ENCODE measurements at regions of chr1 and their contacts with region 1.

Region 1: DNA sequence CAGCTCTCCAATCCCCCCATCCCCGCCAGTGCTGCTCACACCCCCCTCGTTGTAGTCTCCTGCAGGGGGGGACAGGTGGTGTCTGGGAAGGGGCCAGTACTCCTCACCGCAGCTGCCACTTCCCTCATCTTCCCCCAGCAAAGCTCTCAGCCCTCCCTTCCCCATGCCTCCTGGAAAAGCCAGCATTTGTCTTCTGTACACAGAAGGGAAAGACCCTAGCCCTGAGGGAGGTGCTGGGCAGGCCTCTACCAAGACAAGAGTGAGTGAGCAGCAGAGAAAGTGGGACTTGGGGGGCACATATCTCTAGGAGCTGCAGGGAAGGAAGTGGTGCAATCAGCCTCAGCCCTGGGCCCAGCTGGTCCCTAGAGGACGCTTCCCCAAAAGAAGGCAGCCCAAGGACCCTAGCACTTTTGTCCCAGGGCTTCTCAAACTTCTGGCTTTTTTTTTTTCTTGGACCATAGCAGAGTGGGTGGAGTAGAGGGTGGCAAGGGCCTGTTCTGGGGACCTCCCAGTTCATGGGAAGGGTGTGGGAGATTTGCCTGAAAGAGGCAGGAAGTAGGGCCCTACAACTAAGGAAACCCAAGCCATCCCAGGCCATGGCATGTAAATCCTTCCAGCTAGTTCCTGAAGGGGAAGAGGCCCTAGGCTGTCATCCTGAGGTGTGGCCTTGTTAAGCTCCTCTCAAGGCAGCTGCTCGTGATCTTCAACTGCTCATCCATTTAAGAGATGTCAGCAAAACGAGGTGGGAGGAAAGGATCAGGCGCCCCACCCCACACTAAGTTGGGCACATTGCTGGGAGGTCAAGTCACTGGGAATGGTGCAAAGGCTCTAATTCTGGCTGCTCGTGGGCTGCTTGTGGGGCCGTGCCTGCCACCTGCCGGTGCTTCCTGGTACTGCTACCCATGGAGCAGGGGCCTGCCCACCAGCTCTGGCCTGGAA is 12.6 kb downstream of the ZC3H12A start:
- DNase-seq: peak; percentile 77 to 91 (median 84)
- H3K4me3 ChIP-seq: no peak overlapping the region
- H3K27ac ChIP-seq: peak overlapping the region; percentile 28 to 98 (median 68)
- H3K4me1 ChIP-seq: peaks cover 38 to 55% of the 10 kb centered on the region in 2 donors
- H3K27me3 ChIP-seq: no peaks in the 10 kb centered on the region
- CTCF ChIP-seq: peak; percentile 97 to 99 (median 98)
- POLR2A ChIP-seq: no peak

Region 2: GRCh38 chr1:37449936-37450335 is 37.0 kb before region 1 on chr1:
- intact Hi-C with region 1: loop called (anchors 2 kb)
- DNase-seq: no peak
- H3K4me3 ChIP-seq: no peak overlapping the region
- H3K27ac ChIP-seq: no peak overlapping the region
- H3K4me1 ChIP-seq: peaks cover 0 to 4% of the 10 kb centered on the region in 2 donors
- H3K27me3 ChIP-seq: no peaks in the 10 kb centered on the region
- CTCF ChIP-seq: no peak
- POLR2A ChIP-seq: no peak